Pancreas (tissue), 10 donors: ENCODE measurements at regions of chr19 and their contacts with region 1.

Region 1: DNA sequence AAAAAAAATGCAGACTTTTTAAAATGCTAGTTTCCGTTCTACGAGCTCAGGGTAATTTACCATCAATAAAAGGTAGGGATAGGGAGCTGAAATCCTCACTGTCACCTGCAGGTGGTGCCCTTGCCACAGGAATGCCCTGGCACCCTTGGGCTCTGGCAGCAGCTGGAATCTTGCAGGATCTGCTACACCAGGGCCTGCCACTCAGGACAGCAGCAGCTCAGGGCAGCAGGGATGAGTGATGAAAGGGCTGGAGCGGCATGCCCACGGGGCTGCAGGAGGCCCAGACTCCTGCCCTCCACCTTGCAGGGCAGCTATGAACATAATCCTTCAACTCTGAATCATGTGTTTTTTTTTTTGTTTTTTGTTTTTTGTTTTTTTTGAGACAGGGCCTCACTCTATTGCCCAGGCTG is 54.0 kb downstream of the GNG7 start:
- DNase-seq: peak; percentile 69 to 88 (median 84)
- ATAC-seq: peak; percentile 89 to 99 (median 96)
- H3K4me3 ChIP-seq: no peak overlapping the region
- H3K27ac ChIP-seq: no peak overlapping the region
- H3K4me1 ChIP-seq: peaks cover 0 to 6% (median 6%) of the 10 kb centered on the region in 3 donors
- H3K27me3 ChIP-seq: no peaks in the 10 kb centered on the region
- CTCF ChIP-seq: peak; percentile 67 to 83 (median 74)

Region 2: GRCh38 chr19:2221918-2222317 is 426.6 kb before region 1 on chr19:
- intact Hi-C with region 1: no loop called
- DNase-seq: no peak
- ATAC-seq: no peak
- H3K4me3 ChIP-seq: no peak overlapping the region
- H3K27ac ChIP-seq: no peak overlapping the region
- H3K4me1 ChIP-seq: no peaks in the 10 kb centered on the region
- H3K27me3 ChIP-seq: no peaks in the 10 kb centered on the region
- CTCF ChIP-seq: no peak

Region 3: DNA sequence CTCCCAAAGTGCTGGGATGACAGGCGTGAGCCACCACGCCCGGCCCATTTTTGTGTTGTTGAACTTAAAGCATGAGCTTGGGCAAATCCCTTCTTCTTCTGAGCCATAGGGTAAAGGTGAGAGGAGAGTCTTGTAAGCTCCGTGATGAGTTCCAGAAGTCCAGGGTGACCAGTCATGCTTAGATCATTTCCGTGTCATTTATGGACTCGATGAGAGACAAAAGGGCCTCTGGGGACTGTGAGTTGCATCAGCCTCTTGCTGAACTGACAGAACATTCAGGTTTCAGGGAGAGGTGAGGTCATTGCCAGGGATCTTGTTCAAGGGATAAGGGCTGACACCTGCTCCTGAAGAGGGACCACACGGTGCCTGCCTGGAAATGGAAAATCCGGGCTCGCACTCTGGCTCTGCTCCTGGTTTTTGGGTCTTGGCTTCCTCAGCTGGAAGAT is 119.0 kb before region 1 on chr19:
- intact Hi-C with region 1: no loop called
- DNase-seq: peak in 1 of 6 donors; percentile 8
- ATAC-seq: peak in 1 of 4 donors; percentile 34
- H3K4me3 ChIP-seq: no peak overlapping the region
- H3K27ac ChIP-seq: no peak overlapping the region
- H3K4me1 ChIP-seq: peaks cover 0 to 14% (median 11%) of the 10 kb centered on the region in 3 donors
- H3K27me3 ChIP-seq: no peaks in the 10 kb centered on the region
- CTCF ChIP-seq: no peak

Region 4: GRCh38 chr19:2750808-2751443 is 102.4 kb after region 1 on chr19:
- intact Hi-C with region 1: loop called in 2 of 3 experiments (anchors 5 to 10 kb)
- DNase-seq: no peak
- ATAC-seq: no peak
- H3K4me3 ChIP-seq: no peak overlapping the region
- H3K27ac ChIP-seq: no peak overlapping the region
- H3K4me1 ChIP-seq: no peaks in the 10 kb centered on the region
- H3K27me3 ChIP-seq: no peaks in the 10 kb centered on the region
- CTCF ChIP-seq: no peak

Region 5: DNA sequence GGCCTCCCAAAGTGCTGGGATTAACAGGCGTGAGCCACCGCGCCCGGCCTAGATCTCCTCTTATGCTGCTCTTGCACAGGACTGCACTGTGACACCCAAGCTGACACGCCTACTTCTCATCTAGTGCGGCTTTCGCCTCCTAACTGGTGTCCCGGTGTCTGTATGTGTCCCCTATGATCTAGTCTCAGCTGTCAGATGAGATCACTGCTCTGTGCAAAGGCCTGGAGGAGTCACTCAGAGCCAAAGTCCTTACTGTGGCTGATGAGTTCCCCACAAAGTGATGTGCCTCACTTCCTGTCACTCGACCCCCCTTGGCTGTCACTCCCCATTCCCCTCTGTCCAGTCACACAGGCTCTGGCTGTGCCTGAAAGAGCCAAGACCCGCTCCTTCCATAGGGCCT is 221.1 kb after region 1 on chr19:
- intact Hi-C with region 1: loop called in 1 of 3 experiments (anchors 5 kb)
- DNase-seq: no peak
- ATAC-seq: no peak
- H3K4me3 ChIP-seq: no peak overlapping the region
- H3K27ac ChIP-seq: no peak overlapping the region
- H3K4me1 ChIP-seq: no peaks in the 10 kb centered on the region
- H3K27me3 ChIP-seq: no peaks in the 10 kb centered on the region
- CTCF ChIP-seq: no peak